H1 (cell line): ENCODE measurements at regions of chr17 and their contacts with region 1.

Region 1: GRCh38 chr17:64063766-64064224 is 43.4 kb upstream of the ICAM2 start:
- DNase-seq: peak; percentile 43 to 82
- H3K4me3 ChIP-seq: peak overlapping the region in 1 of 4 experiments; percentile 35; a peak in 2 of 8 replicates
- H3K27ac ChIP-seq: no peak overlapping the region
- H3K4me1 ChIP-seq: peaks cover 0 to 3% (median 0%) of the 10 kb centered on the region in 4 experiments; a peak in 1 of 7 replicates
- H3K27me3 ChIP-seq: no peaks in the 10 kb centered on the region
- CTCF ChIP-seq: peak; percentile 90 to 93 (median 92)
- EP300 ChIP-seq: no peak
- POLR2A ChIP-seq: 0 out of 3 replicates have a peak, but pooled peaks of 1 of the 2 experiments have one; percentile 30
- RAD21 ChIP-seq: peak; percentile 89 to 90

Region 2: GRCh38 chr17:64005734-64006167 is 58.0 kb before region 1 on chr17:
- CTCF ChIA-PET with region 1: no interaction called
- POLR2A ChIA-PET with region 1: no interaction called
- DNase-seq: no peak
- H3K4me3 ChIP-seq: no peak overlapping the region
- H3K27ac ChIP-seq: no peak overlapping the region
- H3K4me1 ChIP-seq: peaks cover 0 to 12% (median 5%) of the 10 kb centered on the region in 4 experiments; a peak in 4 of 7 replicates
- H3K27me3 ChIP-seq: no peaks in the 10 kb centered on the region; a peak in 1 of 7 replicates
- CTCF ChIP-seq: no peak
- EP300 ChIP-seq: no peak
- POLR2A ChIP-seq: no peak
- RAD21 ChIP-seq: no peak

Region 3: GRCh38 chr17:64051153-64051552 is 12.6 kb before region 1 on chr17:
- CTCF ChIA-PET with region 1: interaction called, 21 read pairs
- POLR2A ChIA-PET with region 1: interaction called, 3 read pairs
- DNase-seq: no peak
- H3K4me3 ChIP-seq: no peak overlapping the region
- H3K27ac ChIP-seq: no peak overlapping the region
- H3K4me1 ChIP-seq: peaks cover 0 to 5% (median 4%) of the 10 kb centered on the region in 4 experiments; a peak in 6 of 7 replicates
- H3K27me3 ChIP-seq: no peaks in the 10 kb centered on the region
- CTCF ChIP-seq: no peak
- EP300 ChIP-seq: no peak
- POLR2A ChIP-seq: no peak
- RAD21 ChIP-seq: no peak

Region 4: DNA sequence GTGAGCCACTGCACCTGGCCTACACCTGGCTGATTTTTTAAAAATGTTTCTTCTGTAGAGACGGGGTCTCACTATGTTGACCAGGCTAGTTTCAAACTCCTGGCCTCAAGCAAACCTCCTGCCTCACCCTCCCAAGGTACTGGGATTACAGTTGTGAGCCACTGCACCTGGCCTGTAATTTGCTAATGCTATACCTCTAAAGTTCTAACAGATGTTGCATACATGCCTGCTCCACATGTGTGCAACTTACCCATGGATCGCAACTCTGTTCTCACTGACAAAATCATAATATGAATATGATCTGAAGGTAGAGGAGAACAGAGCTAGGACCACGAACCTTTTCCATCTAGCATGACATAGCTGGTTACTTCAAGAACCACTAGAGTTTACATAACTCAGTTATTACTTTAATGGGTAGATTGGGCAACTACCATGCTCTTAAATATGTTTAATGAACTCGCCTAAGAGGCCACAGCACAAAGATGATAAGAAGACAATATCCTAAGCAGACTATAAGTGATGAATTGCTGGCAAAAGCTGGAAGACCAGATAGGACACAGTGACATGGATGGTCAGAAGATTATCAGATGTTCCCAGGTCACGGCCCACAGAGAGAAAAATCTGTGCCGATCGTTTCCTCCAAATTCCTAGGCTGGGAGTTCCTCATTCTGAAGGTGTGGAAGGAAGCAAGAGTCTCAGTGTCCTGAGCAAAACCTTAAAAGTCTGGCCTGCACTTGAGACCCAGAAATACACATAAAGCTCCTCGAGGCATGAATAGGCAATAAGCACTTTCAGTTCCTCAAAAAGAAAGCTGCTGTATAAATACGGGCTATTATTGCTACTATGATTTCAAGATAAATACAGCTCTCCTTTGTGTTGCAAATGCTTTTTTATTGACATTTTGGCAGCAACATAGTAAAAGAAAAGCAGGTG is 10.2 kb after region 1 on chr17:
- CTCF ChIA-PET with region 1: interaction called, 35 read pairs
- POLR2A ChIA-PET with region 1: interaction called, 3 read pairs
- DNase-seq: no peak
- H3K4me3 ChIP-seq: no peak overlapping the region
- H3K27ac ChIP-seq: no peak overlapping the region
- H3K4me1 ChIP-seq: no peaks in the 10 kb centered on the region
- H3K27me3 ChIP-seq: no peaks in the 10 kb centered on the region
- CTCF ChIP-seq: no peak
- EP300 ChIP-seq: no peak
- POLR2A ChIP-seq: no peak
- RAD21 ChIP-seq: no peak

Region 5: DNA sequence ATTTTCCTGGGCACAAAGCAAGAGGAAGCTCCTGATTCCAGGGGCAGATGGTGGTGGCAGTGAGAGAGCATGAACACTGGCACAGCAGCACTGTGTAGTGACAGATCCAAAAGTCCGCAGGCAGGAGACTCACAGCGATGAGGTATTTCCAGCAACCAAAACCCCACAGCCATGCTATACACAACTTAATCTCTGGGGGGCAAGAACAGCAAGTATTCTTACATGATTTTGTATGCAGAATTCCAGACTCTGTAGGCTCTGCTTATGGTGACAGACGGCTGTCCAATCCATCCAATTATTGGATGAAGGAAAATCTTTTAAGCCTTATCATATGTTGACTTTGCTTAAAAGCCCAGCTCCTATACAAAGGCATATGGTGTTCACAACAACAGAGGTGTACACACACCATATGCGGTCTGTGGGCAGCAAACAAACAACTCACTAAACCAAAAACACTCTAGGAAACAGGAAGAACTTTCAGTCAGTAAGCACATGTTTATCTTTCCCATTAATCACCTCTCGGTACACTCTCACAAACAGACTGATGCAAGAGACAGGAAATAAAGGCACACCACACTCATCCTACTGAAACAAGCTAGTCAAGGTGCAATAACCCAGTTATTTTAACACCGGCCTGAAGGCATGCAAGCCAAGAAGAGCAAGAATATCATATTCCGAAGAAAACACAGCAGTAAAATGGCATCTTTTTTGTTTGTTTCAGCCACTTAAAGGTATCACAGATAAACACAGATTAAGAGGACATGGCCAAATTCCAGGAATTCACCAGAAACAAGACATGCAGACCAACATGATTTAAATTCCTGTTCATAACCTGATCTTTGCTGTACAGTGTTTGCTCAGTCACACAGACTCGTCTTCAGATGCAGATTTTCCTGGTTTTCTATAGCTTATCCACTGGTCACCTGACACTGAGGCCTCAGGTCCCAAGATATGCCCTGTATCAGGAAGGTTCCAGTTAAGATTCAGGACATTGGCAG is 18.3 kb after region 1 on chr17:
- CTCF ChIA-PET with region 1: interaction called, 35 read pairs
- POLR2A ChIA-PET with region 1: no interaction called
- DNase-seq: no peak
- H3K4me3 ChIP-seq: no peak overlapping the region
- H3K27ac ChIP-seq: no peak overlapping the region
- H3K4me1 ChIP-seq: peaks cover 0 to 7% (median 0%) of the 10 kb centered on the region in 4 experiments; a peak in 2 of 7 replicates
- H3K27me3 ChIP-seq: no peaks in the 10 kb centered on the region
- CTCF ChIP-seq: no peak
- EP300 ChIP-seq: no peak
- POLR2A ChIP-seq: no peak
- RAD21 ChIP-seq: no peak

Region 6: GRCh38 chr17:64091116-64091515 is 27.3 kb after region 1 on chr17:
- CTCF ChIA-PET with region 1: interaction called, 17 read pairs
- POLR2A ChIA-PET with region 1: no interaction called
- DNase-seq: no peak
- H3K4me3 ChIP-seq: no peak overlapping the region
- H3K27ac ChIP-seq: no peak overlapping the region
- H3K4me1 ChIP-seq: no peaks in the 10 kb centered on the region; a peak in 1 of 7 replicates
- H3K27me3 ChIP-seq: no peaks in the 10 kb centered on the region; a peak in 1 of 7 replicates
- CTCF ChIP-seq: no peak
- EP300 ChIP-seq: no peak
- POLR2A ChIP-seq: no peak
- RAD21 ChIP-seq: no peak

Region 7: DNA sequence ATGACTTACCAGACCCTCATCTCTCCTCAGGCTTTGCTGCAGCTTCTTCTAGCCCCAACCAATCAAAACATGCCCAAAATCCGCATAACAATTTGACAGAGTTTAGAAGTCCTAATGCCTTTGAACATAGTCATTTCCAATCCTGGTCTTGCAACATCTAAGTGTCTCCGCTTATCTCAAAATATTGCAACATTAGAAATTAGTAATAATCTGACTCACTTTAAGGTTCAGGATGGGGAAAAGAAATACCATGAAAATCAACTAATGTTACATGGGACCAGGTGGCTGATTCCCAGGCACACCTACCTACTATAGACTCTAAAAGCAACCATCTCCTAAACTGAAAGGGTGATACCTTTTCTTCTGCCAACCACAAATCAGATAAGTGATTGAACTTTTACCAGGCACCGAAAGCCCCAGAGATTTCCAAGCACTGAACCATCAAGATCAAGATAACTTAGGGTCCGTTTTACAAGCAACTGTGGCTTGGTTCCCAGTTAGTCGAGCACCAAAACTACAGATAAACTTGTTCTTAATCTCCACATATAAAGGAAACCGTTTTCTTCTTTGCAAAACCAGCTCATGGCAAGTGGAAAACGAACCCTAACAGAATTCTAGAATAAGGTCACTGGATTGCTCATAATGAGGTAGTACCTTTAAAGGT is 52.2 kb after region 1 on chr17:
- CTCF ChIA-PET with region 1: interaction called, 14 read pairs
- POLR2A ChIA-PET with region 1: no interaction called
- DNase-seq: no peak
- H3K4me3 ChIP-seq: no peak overlapping the region
- H3K27ac ChIP-seq: no peak overlapping the region
- H3K4me1 ChIP-seq: no peaks in the 10 kb centered on the region
- H3K27me3 ChIP-seq: no peaks in the 10 kb centered on the region
- CTCF ChIP-seq: no peak
- EP300 ChIP-seq: no peak
- POLR2A ChIP-seq: no peak
- RAD21 ChIP-seq: no peak

Region 8: DNA sequence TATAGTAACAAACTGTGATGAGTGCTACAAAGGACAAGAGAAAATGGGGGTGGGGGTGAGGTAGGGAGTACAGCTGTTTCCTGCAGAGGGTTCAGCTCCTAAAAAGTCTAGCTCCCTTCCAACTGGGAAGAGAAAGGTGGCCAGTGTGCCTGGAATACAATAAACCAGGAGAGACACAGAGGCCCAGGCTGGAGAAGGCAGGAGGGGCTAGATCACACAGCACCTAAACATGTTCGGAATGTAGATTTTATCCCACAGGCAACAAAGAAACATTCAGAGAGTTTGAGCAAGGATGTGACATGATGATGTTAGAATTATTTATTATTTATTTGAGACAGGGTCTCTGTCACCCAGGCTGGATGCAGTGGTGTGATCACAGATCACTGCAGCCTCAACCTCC is 189.0 kb after region 1 on chr17:
- CTCF ChIA-PET with region 1: no interaction called
- POLR2A ChIA-PET with region 1: no interaction called
- DNase-seq: no peak
- H3K4me3 ChIP-seq: no peak overlapping the region
- H3K27ac ChIP-seq: no peak overlapping the region
- H3K4me1 ChIP-seq: peaks cover 0 to 3% (median 1%) of the 10 kb centered on the region in 4 experiments; a peak in 2 of 7 replicates
- H3K27me3 ChIP-seq: no peaks in the 10 kb centered on the region
- CTCF ChIP-seq: no peak
- EP300 ChIP-seq: no peak
- POLR2A ChIP-seq: no peak
- RAD21 ChIP-seq: no peak

Region 9: GRCh38 chr17:64281962-64282727 is 218.3 kb after region 1 on chr17:
- CTCF ChIA-PET with region 1: interaction called, 16 read pairs
- POLR2A ChIA-PET with region 1: no interaction called
- DNase-seq: peak in 1 of 2 experiments; percentile 62
- H3K4me3 ChIP-seq: no peak overlapping the region
- H3K27ac ChIP-seq: no peak overlapping the region
- H3K4me1 ChIP-seq: no peaks in the 10 kb centered on the region
- H3K27me3 ChIP-seq: no peaks in the 10 kb centered on the region
- CTCF ChIP-seq: peak; percentile 50 to 90 (median 61)
- EP300 ChIP-seq: no peak
- POLR2A ChIP-seq: no peak
- RAD21 ChIP-seq: peak; percentile 91